ENCODE measurements at regions of chr2 and their contacts with region 1.

Region 1: GRCh38 chr2:215920244-215921100 is 92.9 kb downstream of the MREG start:
- DNase-seq: peak; percentile 80
- H3K4me3 Mint-ChIP-seq: no peak overlapping the region
- H3K27ac Mint-ChIP-seq: no peak overlapping the region
- H3K4me1 Mint-ChIP-seq: peaks cover 27% of the 10 kb centered on the region
- H3K27me3 Mint-ChIP-seq: no peaks in the 10 kb centered on the region
- CTCF ChIP-seq: peak; percentile 90

Region 2: GRCh38 chr2:214310319-214310718 is 1610.2 kb before region 1 on chr2:
- CTCF ChIA-PET with region 1: no interaction called
- POLR2A ChIA-PET with region 1: no interaction called
- intact Hi-C with region 1: loop called (anchors 5 kb)
- DNase-seq: peak; percentile 32
- H3K4me3 Mint-ChIP-seq: no peak overlapping the region
- H3K27ac Mint-ChIP-seq: no peak overlapping the region
- H3K4me1 Mint-ChIP-seq: peaks cover 14% of the 10 kb centered on the region
- H3K27me3 Mint-ChIP-seq: no peaks in the 10 kb centered on the region
- CTCF ChIP-seq: peak; percentile 20

Region 3: GRCh38 chr2:214960677-214961076 is 959.8 kb before region 1 on chr2:
- CTCF ChIA-PET with region 1: interaction called, 4 read pairs
- POLR2A ChIA-PET with region 1: no interaction called
- intact Hi-C with region 1: loop called (anchors 1 kb)
- DNase-seq: peak; percentile 13
- H3K4me3 Mint-ChIP-seq: no peak overlapping the region
- H3K27ac Mint-ChIP-seq: no peak overlapping the region
- H3K4me1 Mint-ChIP-seq: no peaks in the 10 kb centered on the region
- H3K27me3 Mint-ChIP-seq: no peaks in the 10 kb centered on the region
- CTCF ChIP-seq: peak; percentile 24

Region 4: GRCh38 chr2:215277979-215278378 is 642.5 kb before region 1 on chr2:
- CTCF ChIA-PET with region 1: interaction called, 5 read pairs
- POLR2A ChIA-PET with region 1: no interaction called
- intact Hi-C with region 1: loop called (anchors 5 kb)
- DNase-seq: peak; percentile 77
- H3K4me3 Mint-ChIP-seq: no peak overlapping the region
- H3K27ac Mint-ChIP-seq: no peak overlapping the region
- H3K4me1 Mint-ChIP-seq: no peaks in the 10 kb centered on the region
- H3K27me3 Mint-ChIP-seq: no peaks in the 10 kb centered on the region
- CTCF ChIP-seq: no peak

Region 5: DNA sequence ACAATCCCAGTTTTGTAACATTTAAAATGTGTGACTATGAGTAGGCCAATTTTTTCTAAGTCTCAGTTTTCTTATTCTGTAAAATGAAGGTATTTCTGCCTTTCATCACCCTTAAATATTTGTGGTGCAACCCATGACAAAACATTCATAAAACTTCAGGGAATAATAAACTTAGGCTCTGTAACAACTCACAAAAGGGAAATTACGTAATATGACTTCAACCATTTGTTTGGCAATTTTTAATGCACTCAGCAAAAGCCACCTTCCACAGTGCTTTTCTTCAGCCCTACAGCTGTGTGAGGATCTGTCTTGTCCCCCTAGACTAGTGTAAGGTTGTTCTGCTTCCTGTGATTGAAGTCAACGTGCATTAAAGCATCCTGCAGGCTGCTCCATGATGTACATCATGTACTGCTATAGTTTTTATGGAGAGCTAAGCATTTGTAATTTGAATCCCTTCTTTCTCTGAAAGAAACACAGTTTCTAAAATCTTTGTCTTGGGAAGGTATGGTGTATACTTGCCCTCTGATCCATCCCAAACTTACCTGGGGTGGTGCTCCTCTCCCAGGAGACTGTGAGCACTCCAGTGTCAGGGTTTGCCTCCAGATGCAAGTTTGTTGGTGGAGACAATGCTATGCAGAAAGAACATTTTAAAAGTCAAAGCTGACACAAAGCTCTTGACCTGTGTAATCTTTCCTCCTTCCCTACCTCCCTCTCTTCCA is 523.7 kb before region 1 on chr2:
- CTCF ChIA-PET with region 1: no interaction called
- POLR2A ChIA-PET with region 1: interaction called, 4 read pairs
- intact Hi-C with region 1: loop called (anchors 5 kb)
- DNase-seq: peak; percentile 75
- H3K4me3 Mint-ChIP-seq: no peak overlapping the region
- H3K27ac Mint-ChIP-seq: no peak overlapping the region
- H3K4me1 Mint-ChIP-seq: peaks cover 7% of the 10 kb centered on the region
- H3K27me3 Mint-ChIP-seq: no peaks in the 10 kb centered on the region
- CTCF ChIP-seq: no peak

Region 6: DNA sequence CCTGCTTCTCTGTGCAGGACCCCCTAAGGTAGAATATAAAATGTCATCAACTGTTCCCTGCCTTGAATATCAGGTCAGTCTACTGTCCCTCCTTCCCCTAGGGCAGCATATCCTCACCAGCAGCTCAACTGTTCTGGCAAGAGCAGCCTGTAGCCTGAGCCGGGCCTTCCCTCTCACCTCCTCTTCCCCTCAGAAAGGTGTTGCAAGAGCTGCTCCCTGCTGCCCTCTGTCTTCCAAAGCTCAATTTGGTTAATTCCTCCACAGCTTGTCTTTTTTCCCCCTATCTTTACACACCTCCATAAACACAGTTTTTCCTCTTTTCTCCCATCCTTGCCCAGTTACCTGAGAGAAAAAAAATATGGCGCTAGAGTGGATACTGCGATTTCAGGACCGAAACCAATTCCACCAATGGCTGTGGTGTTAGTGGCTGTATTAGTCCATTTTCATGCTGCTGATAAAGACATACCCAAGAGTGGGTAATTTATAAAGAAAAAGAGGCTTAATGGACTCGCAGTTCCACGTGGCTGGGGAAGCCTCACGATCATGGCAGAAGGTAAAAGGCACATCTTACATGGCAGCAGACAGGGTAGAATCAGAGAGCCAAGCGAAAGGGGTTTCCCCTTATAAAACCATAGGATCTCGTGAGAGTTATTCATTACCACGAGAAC is 91.8 kb before region 1 on chr2:
- CTCF ChIA-PET with region 1: interaction called, 3 read pairs
- POLR2A ChIA-PET with region 1: no interaction called
- intact Hi-C with region 1: loop called (anchors 2 kb)
- DNase-seq: peak; percentile 83
- H3K4me3 Mint-ChIP-seq: no peak overlapping the region
- H3K27ac Mint-ChIP-seq: peak overlapping the region; percentile 24
- H3K4me1 Mint-ChIP-seq: peaks cover 22% of the 10 kb centered on the region
- H3K27me3 Mint-ChIP-seq: no peaks in the 10 kb centered on the region
- CTCF ChIP-seq: peak; percentile 58

Region 7: GRCh38 chr2:215843579-215843978 is 76.9 kb before region 1 on chr2:
- CTCF ChIA-PET with region 1: no interaction called
- POLR2A ChIA-PET with region 1: no interaction called
- intact Hi-C with region 1: no loop called
- DNase-seq: peak; percentile 84
- H3K4me3 Mint-ChIP-seq: no peak overlapping the region
- H3K27ac Mint-ChIP-seq: no peak overlapping the region
- H3K4me1 Mint-ChIP-seq: peaks cover 8% of the 10 kb centered on the region
- H3K27me3 Mint-ChIP-seq: no peaks in the 10 kb centered on the region
- CTCF ChIP-seq: no peak

Region 8: GRCh38 chr2:216104691-216105090 is 184.2 kb after region 1 on chr2:
- CTCF ChIA-PET with region 1: no interaction called
- POLR2A ChIA-PET with region 1: no interaction called
- intact Hi-C with region 1: no loop called
- DNase-seq: no peak
- H3K4me3 Mint-ChIP-seq: no peak overlapping the region
- H3K27ac Mint-ChIP-seq: no peak overlapping the region
- H3K4me1 Mint-ChIP-seq: peaks cover 4% of the 10 kb centered on the region
- H3K27me3 Mint-ChIP-seq: peaks cover 14% of the 10 kb centered on the region
- CTCF ChIP-seq: no peak